Endothelial cell of umbilical vein (primary cell): ENCODE measurements at regions of chr20 and their contacts with region 1.

Region 1: GRCh38 chr20:10347086-10347880 is 86.7 kb downstream of the MKKS start:
- DNase-seq: no peak
- H3K4me3 ChIP-seq: no peak overlapping the region
- H3K27ac ChIP-seq: no peak overlapping the region
- H3K4me1 ChIP-seq: peaks cover 28% of the 10 kb centered on the region
- H3K27me3 ChIP-seq: no peaks in the 10 kb centered on the region
- CTCF ChIP-seq: no peak
- POLR2A ChIP-seq: no peak

Region 2: DNA sequence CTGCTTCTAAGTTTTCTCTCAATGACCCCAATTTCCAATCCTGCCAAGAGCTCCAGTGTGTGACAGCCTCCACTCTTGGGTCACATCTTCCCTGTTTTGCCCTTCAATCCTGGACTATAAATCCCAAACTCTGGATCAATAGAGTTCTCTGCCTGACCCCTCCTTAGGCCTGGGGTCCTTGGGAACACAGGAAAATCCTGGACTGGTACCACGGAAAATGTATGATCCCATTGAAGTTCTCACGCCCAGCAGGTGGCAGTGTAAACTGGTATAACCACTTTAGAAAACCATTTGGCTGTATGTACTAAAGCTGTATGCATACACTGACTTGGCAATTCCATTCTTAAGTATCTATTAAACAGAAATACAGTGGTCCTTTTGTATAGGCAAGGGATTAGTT is 30.7 kb before region 1 on chr20:
- CTCF ChIA-PET with region 1: interaction called, 10 read pairs
- POLR2A ChIA-PET with region 1: no interaction called
- dilution Hi-C with region 1: no loop called
- intact Hi-C with region 1: loop called (anchors 2 kb)
- DNase-seq: peak; percentile 35
- H3K4me3 ChIP-seq: no peak overlapping the region
- H3K27ac ChIP-seq: no peak overlapping the region
- H3K4me1 ChIP-seq: no peaks in the 10 kb centered on the region
- H3K27me3 ChIP-seq: no peaks in the 10 kb centered on the region
- CTCF ChIP-seq: peak; percentile 14 to 37
- POLR2A ChIP-seq: no peak